ENCODE measurements at regions of chr1 and their contacts with region 1.

Region 1: GRCh38 chr1:190511554-190511953 is 33.9 kb upstream of the BRINP3 start:
- DNase-seq: no peak
- ATAC-seq: no peak
- H3K4me3 ChIP-seq: no peak overlapping the region
- H3K27ac ChIP-seq: no peak overlapping the region
- H3K4me1 ChIP-seq: no peaks in the 10 kb centered on the region
- H3K27me3 ChIP-seq: no peaks in the 10 kb centered on the region
- CTCF ChIP-seq: no peak
- EP300 ChIP-seq: no peak
- POLR2A ChIP-seq: no peak
- RAD21 ChIP-seq: no peak

Region 2: DNA sequence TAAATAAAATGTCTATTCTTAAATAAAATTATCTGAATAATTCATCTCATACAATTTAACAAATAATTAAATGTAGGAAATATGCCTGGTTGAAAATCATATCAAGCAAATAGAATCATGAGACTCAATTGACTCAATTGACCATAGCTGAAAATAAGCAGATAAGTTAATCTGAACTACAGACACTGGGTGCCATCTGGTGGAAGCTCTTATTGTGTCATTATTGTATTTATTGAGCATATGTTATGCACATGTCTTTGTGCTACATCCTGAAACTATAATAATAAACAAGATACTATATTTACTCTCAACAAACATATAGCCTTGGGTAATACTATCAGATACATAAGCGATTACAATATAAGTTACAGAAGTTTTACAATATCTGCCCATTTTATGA is 74.9 kb before region 1 on chr1:
- CTCF ChIA-PET with region 1: no interaction called
- POLR2A ChIA-PET with region 1: no interaction called
- in situ Hi-C with region 1: no loop called
- intact Hi-C with region 1: no loop called
- DNase-seq: peak; percentile 15
- ATAC-seq: no peak
- H3K4me3 ChIP-seq: no peak overlapping the region
- H3K27ac ChIP-seq: no peak overlapping the region
- H3K4me1 ChIP-seq: no peaks in the 10 kb centered on the region
- H3K27me3 ChIP-seq: no peaks in the 10 kb centered on the region
- CTCF ChIP-seq: peak; percentile 36; the same call in 1 of the 2 replicates
- EP300 ChIP-seq: no peak
- POLR2A ChIP-seq: no peak
- RAD21 ChIP-seq: no peak

Region 3: GRCh38 chr1:190475421-190476141 is 36.0 kb before region 1 on chr1:
- CTCF ChIA-PET with region 1: no interaction called
- POLR2A ChIA-PET with region 1: no interaction called
- in situ Hi-C with region 1: no loop called
- intact Hi-C with region 1: loop called (anchors 2 kb)
- DNase-seq: no peak
- ATAC-seq: peak; percentile 49
- H3K4me3 ChIP-seq: no peak overlapping the region
- H3K27ac ChIP-seq: no peak overlapping the region
- H3K4me1 ChIP-seq: no peaks in the 10 kb centered on the region
- H3K27me3 ChIP-seq: peaks cover 0 to 37% of the 10 kb centered on the region in 2 experiments; a peak in 2 of 5 replicates
- CTCF ChIP-seq: no peak
- EP300 ChIP-seq: no peak
- POLR2A ChIP-seq: no peak
- RAD21 ChIP-seq: no peak

Measured in HepG2 (cell line).